Activated CD8-positive, alpha-beta T cell treated with anti-CD3 and anti-CD28 coated beads for 36 hours (primary cell): ENCODE measurements at regions of chr1 and their contacts with region 1.

Region 1: GRCh38 chr1:39091845-39092645 is 65.9 kb downstream of the NDUFS5 start:
- DNase-seq: peak; percentile 79
- ATAC-seq: peak; percentile 80
- H3K4me3 Mint-ChIP-seq: no peak overlapping the region
- H3K27ac Mint-ChIP-seq: no peak overlapping the region
- H3K4me1 Mint-ChIP-seq: no peaks in the 10 kb centered on the region
- H3K27me3 Mint-ChIP-seq: no peaks in the 10 kb centered on the region
- CTCF ChIP-seq: peak; percentile 67

Region 2: DNA sequence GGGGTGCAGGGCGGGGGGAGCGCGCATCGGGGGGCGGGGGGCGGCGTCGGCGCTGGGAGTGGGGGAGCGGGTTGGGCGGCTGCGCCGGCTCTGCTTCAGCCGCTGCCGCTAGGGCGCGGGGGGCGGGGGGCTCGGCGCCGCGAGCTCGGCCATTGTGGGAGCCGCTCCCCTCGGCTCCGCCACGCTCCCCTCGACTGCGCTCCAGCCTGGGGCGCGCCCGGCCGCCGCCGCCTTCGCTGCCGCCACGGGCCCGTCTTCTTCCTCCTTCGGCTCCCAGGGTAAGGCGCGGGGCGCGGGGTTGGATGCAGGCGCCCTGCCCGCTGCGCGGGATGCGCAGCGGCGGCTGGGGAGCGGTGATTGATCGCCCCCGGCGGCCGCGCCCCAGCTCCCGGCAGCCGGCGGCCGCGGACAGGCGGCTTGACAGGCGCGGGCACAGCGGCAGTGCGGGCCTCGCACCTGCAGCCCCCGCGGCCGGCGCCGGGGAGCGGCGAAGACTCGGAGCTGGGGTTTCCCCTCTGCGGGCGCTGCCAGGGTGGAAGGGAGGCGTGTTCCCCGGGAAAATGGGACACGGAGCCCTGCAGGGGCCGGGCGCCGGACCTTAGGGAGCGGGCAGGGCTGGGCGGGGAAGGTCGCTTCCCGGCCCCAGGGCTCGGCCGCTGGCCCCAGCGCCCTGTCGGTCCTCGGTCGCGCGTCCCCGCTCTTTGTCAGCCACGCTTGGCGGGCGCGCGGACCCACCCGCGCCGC is 10.6 kb before region 1 on chr1:
- CTCF ChIA-PET with region 1: interaction called, 12 read pairs
- POLR2A ChIA-PET with region 1: no interaction called
- intact Hi-C with region 1: no loop called
- DNase-seq: peak; percentile 28
- ATAC-seq: peak; percentile 69
- H3K4me3 Mint-ChIP-seq: no peak overlapping the region
- H3K27ac Mint-ChIP-seq: no peak overlapping the region
- H3K4me1 Mint-ChIP-seq: peaks cover 3% of the 10 kb centered on the region
- H3K27me3 Mint-ChIP-seq: peaks cover 20% of the 10 kb centered on the region
- CTCF ChIP-seq: no peak